ENCODE measurements at regions of chr2 and their contacts with region 1.

Region 1: GRCh38 chr2:134118279-134119116 is 135.4 kb upstream of the MGAT5 start:
- DNase-seq: peak; percentile 89
- H3K4me3 ChIP-seq: peak overlapping the region; percentile 99
- H3K27ac ChIP-seq: no peak overlapping the region
- H3K4me1 ChIP-seq: peaks cover 35% of the 10 kb centered on the region
- CTCF ChIP-seq: peak; percentile 96

Region 2: GRCh38 chr2:133886735-133887660 is 231.5 kb before region 1 on chr2:
- CTCF ChIA-PET with region 1: interaction called, 5 read pairs
- POLR2A ChIA-PET with region 1: no interaction called
- intact Hi-C with region 1: loop called (anchors 5 kb)
- DNase-seq: peak; percentile 76
- H3K4me3 ChIP-seq: no peak overlapping the region
- H3K27ac ChIP-seq: no peak overlapping the region
- H3K4me1 ChIP-seq: no peaks in the 10 kb centered on the region
- CTCF ChIP-seq: peak; percentile 86

Region 3: DNA sequence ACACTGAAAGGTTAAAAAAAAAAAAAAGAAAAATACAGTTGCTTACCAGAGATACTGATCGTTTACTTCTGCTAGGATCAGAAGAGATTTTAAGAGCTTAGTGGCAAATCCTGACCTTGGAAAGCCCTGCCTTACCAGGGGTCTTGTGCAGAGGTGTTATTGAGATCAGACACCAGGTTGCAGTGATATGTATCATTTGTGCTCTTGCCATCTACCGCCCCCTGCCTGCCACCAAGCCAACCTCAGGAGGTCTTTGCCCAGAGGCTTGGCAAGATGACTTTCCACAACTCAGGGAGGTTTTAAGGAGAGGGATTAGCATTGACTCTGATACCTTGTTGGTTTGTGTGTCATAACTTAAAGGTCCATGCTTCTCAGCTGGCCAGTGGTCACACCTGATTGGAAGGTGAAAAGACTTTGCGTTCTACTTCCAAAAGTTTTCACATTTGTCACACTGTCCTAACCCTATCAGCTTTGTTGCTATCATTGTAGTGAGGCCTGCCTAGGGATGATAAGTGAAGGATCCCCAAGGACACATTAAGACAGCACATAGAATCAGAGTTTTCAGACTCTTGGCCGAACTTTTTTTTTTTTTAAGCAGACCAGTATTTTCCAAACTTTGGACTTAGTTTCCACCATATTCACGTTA is 89.2 kb after region 1 on chr2:
- CTCF ChIA-PET with region 1: interaction called, 6 read pairs
- POLR2A ChIA-PET with region 1: interaction called, 6 read pairs
- intact Hi-C with region 1: loop called (anchors 5 kb)
- DNase-seq: peak; percentile 65
- H3K4me3 ChIP-seq: no peak overlapping the region
- H3K27ac ChIP-seq: no peak overlapping the region
- H3K4me1 ChIP-seq: peaks cover 44% of the 10 kb centered on the region
- CTCF ChIP-seq: peak; percentile 85

Region 4: DNA sequence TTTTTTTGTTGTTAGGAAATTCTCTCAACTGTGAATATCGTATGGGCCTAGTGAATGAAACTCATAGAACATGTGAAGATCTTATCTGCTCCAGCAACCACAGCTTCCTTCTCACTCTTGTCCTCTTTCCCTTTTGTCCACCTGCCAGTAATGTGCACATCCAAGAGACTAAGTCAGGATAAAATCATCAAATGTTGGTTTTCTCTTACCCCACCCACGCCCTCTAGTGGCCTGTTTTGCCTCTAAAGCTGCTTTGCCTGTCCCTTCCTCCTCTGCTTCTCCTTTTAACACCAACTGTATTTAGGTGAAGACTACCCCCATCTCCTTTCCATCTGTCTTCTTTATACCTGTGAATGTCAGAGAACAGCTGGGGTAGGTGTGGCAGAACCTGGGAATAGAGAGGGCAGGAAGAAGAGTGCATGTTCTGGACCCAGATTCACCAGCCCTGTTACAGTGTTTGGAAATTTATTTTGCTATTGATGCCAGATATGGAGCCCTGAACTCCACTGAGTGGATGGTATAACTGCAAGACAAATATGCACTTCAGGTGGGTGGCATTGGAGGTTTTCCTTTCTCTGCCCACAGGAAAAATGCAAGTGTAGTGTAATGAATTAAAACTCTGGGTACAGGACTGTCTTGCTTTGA is 127.0 kb after region 1 on chr2:
- CTCF ChIA-PET with region 1: interaction called, 16 read pairs
- POLR2A ChIA-PET with region 1: interaction called, 31 read pairs
- intact Hi-C with region 1: loop called (anchors 1 kb)
- DNase-seq: peak; percentile 88
- H3K4me3 ChIP-seq: peak overlapping the region; percentile 24
- H3K27ac ChIP-seq: peak overlapping the region; percentile 63
- H3K4me1 ChIP-seq: peaks cover 78% of the 10 kb centered on the region
- CTCF ChIP-seq: peak; percentile 92

Region 5: DNA sequence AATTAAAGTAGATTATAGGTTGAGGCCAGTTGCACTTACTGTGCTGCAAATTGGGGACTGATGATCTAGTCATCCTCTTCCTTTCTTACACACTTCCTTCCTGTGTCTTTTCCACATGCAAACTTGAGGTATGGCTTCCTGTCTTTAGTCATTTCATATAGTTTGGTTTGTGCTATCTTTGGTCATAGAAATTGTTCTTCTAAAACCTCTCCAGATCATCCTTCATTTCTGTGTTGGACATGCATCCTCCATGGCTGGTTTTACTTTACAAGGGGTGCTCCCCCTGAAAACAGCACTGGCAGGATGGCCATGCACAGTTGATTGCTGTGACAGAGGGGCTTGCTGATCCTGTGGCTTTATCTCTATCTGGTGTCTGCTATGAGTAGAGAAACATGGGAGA is 171.9 kb after region 1 on chr2:
- CTCF ChIA-PET with region 1: interaction called, 3 read pairs
- POLR2A ChIA-PET with region 1: no interaction called
- intact Hi-C with region 1: loop called (anchors 5 kb)
- DNase-seq: peak; percentile 59
- H3K4me3 ChIP-seq: peak overlapping the region; percentile 44
- H3K27ac ChIP-seq: peak overlapping the region; percentile 50
- H3K4me1 ChIP-seq: peaks cover 94% of the 10 kb centered on the region
- CTCF ChIP-seq: no peak

Region 6: GRCh38 chr2:134451347-134451630 is 332.8 kb after region 1 on chr2:
- CTCF ChIA-PET with region 1: interaction called, 10 read pairs
- POLR2A ChIA-PET with region 1: no interaction called
- intact Hi-C with region 1: loop called (anchors 1 kb)
- DNase-seq: no peak
- H3K4me3 ChIP-seq: no peak overlapping the region
- H3K27ac ChIP-seq: no peak overlapping the region
- H3K4me1 ChIP-seq: no peaks in the 10 kb centered on the region
- CTCF ChIP-seq: no peak

Region 7: GRCh38 chr2:134918526-134919340 is 800.2 kb after region 1 on chr2 and contains the start of gene CCNT2:
- CTCF ChIA-PET with region 1: no interaction called
- POLR2A ChIA-PET with region 1: no interaction called
- intact Hi-C with region 1: loop called (anchors 5 kb)
- DNase-seq: peak; percentile 99
- H3K4me3 ChIP-seq: peak within 1 kb of the TSS; percentile 93
- H3K27ac ChIP-seq: peak within 1 kb of the TSS; percentile 90
- H3K4me1 ChIP-seq: peaks cover 23% of the 10 kb centered on the region
- CTCF ChIP-seq: no peak
- total RNA-seq, gene CCNT2: 17.7 and 32.8 TPM in 2 replicates